ENCODE measurements at regions of chr1 and their contacts with region 1.

Region 1: GRCh38 chr1:35622510-35623178 is 18.7 kb downstream of the PSMB2 start:
- DNase-seq: no peak
- ATAC-seq: no peak
- H3K4me3 ChIP-seq: no peak overlapping the region
- H3K4me3 Mint-ChIP-seq: no peak overlapping the region
- H3K27ac ChIP-seq: no peak overlapping the region
- H3K27ac Mint-ChIP-seq: no peak overlapping the region
- H3K4me1 ChIP-seq: no peaks in the 10 kb centered on the region
- H3K4me1 Mint-ChIP-seq: peaks cover 11 to 23% (median 13%) of the 10 kb centered on the region in 3 donors
- H3K27me3 ChIP-seq: no peaks in the 10 kb centered on the region
- H3K27me3 Mint-ChIP-seq: no peaks in the 10 kb centered on the region

Region 2: GRCh38 chr1:35570589-35571137 is 52.0 kb before region 1 on chr1:
- CTCF ChIA-PET with region 1: no interaction called
- POLR2A ChIA-PET with region 1: interaction called in 1 of 2 experiments, 11 read pairs
- DNase-seq: no peak
- ATAC-seq: no peak
- H3K4me3 ChIP-seq: no peak overlapping the region
- H3K4me3 Mint-ChIP-seq: no peak overlapping the region
- H3K27ac ChIP-seq: no peak overlapping the region
- H3K27ac Mint-ChIP-seq: no peak overlapping the region
- H3K4me1 ChIP-seq: peaks cover 0 to 13% of the 10 kb centered on the region in 2 experiments
- H3K4me1 Mint-ChIP-seq: peaks cover 10 to 18% (median 14%) of the 10 kb centered on the region in 3 donors
- H3K27me3 ChIP-seq: peaks cover 0 to 6% of the 10 kb centered on the region in 2 experiments
- H3K27me3 Mint-ChIP-seq: no peaks in the 10 kb centered on the region

Region 3: GRCh38 chr1:35580949-35581388 is 41.7 kb before region 1 on chr1:
- CTCF ChIA-PET with region 1: no interaction called
- POLR2A ChIA-PET with region 1: no interaction called
- DNase-seq: no peak
- ATAC-seq: no peak
- H3K4me3 ChIP-seq: no peak overlapping the region
- H3K4me3 Mint-ChIP-seq: no peak overlapping the region
- H3K27ac ChIP-seq: no peak overlapping the region
- H3K27ac Mint-ChIP-seq: no peak overlapping the region
- H3K4me1 ChIP-seq: peaks cover 9 to 27% of the 10 kb centered on the region in 2 experiments
- H3K4me1 Mint-ChIP-seq: peaks cover 15 to 21% (median 20%) of the 10 kb centered on the region in 3 donors
- H3K27me3 ChIP-seq: no peaks in the 10 kb centered on the region
- H3K27me3 Mint-ChIP-seq: no peaks in the 10 kb centered on the region

Region 4: DNA sequence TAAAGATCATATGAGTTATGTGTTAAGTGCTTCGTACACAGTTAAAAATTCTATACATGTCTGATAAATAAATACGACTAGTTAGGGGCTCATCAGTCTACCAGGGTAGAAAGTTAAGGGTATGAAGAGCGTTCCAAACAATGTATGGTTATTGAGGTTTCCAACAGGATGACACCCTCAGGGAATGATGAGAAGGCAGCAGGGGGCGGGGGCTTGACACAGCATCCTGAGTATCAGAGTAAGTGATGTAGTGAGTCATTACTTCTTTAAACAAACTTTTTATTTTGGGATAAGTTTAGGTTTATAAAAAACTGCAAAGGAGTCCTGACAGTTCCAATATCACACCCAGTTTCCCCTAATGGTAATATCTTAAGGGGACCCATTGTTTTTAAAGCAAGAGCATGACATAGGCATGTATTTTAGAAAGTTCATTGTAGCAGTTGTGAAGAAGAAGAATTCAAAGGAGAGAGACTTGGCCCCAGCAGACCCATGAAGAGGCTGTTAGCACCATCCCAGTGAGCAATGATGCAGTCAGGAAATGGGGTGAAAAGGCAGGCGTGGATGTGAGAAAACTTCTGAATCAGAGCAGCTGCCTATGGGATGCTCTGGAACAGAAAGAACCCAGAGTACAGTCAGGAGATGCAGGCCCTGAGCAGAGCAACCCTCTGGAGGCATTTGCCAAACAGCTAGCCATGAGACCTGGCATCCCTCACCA is 33.7 kb after region 1 on chr1:
- CTCF ChIA-PET with region 1: no interaction called
- POLR2A ChIA-PET with region 1: no interaction called
- DNase-seq: no peak
- ATAC-seq: no peak
- H3K4me3 ChIP-seq: no peak overlapping the region
- H3K4me3 Mint-ChIP-seq: no peak overlapping the region
- H3K27ac ChIP-seq: no peak overlapping the region
- H3K27ac Mint-ChIP-seq: no peak overlapping the region
- H3K4me1 ChIP-seq: no peaks in the 10 kb centered on the region
- H3K4me1 Mint-ChIP-seq: no peaks in the 10 kb centered on the region
- H3K27me3 ChIP-seq: no peaks in the 10 kb centered on the region
- H3K27me3 Mint-ChIP-seq: peaks cover 0 to 7% of the 10 kb centered on the region in 2 donors

Region 5: DNA sequence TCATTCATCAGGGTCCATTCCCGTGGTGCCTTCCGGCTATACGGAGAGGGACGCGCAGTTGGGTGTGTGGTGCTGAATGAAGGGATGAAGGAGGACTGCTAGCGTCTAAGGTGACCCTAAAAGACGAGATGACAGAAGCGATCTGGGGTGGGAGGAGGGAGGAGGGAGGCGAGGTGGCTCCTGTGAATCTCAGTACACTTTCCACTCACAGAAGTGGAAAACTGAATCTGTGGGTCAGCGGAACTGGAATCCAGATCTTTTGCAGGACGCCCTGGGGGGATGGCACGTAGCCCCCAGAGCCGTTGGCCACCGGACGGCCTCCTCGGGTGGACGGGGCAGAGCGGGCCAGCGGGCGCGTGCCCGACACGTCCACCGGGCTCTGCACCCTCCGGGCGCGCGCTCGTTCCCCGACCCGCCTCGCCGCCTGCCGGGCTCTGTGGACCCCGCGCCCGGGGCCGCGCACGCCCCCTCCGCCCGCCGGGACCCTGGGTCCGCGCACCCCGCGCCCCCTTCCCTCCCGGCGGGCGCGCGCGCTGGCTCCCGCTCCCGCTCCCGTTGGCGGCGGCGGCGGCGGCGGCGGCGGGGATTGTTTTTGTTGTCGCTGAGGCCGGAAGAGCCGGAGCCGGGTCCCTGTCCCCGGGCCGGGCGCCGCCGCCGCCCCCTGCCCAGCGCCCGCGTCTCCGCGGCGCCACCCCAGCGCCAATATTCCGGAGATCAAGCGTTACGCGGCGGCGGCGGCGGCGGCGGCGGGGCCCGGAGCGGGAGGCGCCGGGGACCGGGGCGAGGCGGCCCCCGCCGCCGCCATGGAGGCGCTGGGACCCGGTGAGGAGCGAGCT is 185.2 kb after region 1 on chr1 and contains the start of gene AGO4:
- CTCF ChIA-PET with region 1: no interaction called
- POLR2A ChIA-PET with region 1: no interaction called
- DNase-seq: peak in 24 of 35 experiments; percentile 2 to 56 (median 23)
- ATAC-seq: peak; percentile 57 to 66 (median 64)
- H3K4me3 ChIP-seq: peak within 1 kb of the TSS; percentile 62 to 81
- H3K4me3 Mint-ChIP-seq: peak within 1 kb of the TSS; percentile 86 to 93 (median 90)
- H3K27ac ChIP-seq: peak within 1 kb of the TSS; percentile 57
- H3K27ac Mint-ChIP-seq: peak within 1 kb of the TSS; percentile 95
- H3K4me1 ChIP-seq: peaks cover 9 to 43% of the 10 kb centered on the region in 2 experiments
- H3K4me1 Mint-ChIP-seq: peaks cover 38 to 53% (median 44%) of the 10 kb centered on the region in 3 donors
- H3K27me3 ChIP-seq: no peaks in the 10 kb centered on the region
- H3K27me3 Mint-ChIP-seq: no peaks in the 10 kb centered on the region
- total RNA-seq, gene AGO4: 11.5 to 29.7 (median 18.9) TPM

Measured in T-cell (primary cell).